ENCODE measurements at regions of chrX and their contacts with region 1.

Region 1: GRCh38 chrX:40097497-40098263 is at the start of gene BCOR:
- DNase-seq: peak; percentile 69 to 75 (median 72)
- H3K4me3 ChIP-seq: peak within 1 kb of the TSS in 1 of 2 donors; percentile 58
- H3K4me3 Mint-ChIP-seq: peak within 1 kb of the TSS; percentile 89 to 95 (median 91)
- H3K27ac ChIP-seq: peak within 1 kb of the TSS; percentile 63
- H3K27ac Mint-ChIP-seq: peak within 1 kb of the TSS; percentile 79 to 96 (median 92)
- H3K4me1 ChIP-seq: peaks cover 22% of the 10 kb centered on the region
- H3K4me1 Mint-ChIP-seq: peaks cover 9 to 38% (median 23%) of the 10 kb centered on the region in 4 donors
- H3K27me3 ChIP-seq: no peaks in the 10 kb centered on the region
- H3K27me3 Mint-ChIP-seq: no peaks in the 10 kb centered on the region
- total RNA-seq, gene BCOR: 47.1 to 48.7 TPM

Region 2: DNA sequence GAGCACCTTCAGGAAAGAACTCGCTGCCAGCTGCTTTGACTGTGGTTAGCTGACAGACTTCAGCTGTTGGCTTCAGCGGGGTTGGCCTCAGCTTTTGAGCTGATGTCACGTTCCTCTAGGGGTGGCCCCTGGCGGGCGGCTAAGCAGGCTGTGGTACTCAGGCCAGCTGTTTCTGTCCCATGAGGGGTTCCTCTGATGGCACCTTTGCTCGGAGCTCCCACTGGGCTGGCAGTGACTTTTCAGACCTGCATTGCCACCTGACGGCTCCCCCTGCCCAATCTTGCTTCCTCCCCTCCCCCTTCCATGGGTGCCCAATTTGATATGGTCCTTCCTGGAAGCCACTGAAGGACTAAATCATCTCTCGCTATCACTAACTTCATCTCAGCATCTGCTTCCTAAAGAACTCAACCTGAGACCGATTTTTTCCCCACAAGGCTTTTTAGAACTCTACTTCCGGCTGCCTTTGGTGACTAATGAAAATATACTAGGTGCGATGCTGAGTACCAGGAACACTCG is 519.3 kb before region 1 on chrX:
- CTCF ChIA-PET with region 1: no interaction called
- POLR2A ChIA-PET with region 1: no interaction called
- intact Hi-C with region 1: no loop called
- DNase-seq: peak; percentile 9 to 42 (median 11)
- H3K4me3 ChIP-seq: no peak overlapping the region
- H3K4me3 Mint-ChIP-seq: peak overlapping the region; percentile 61 to 91 (median 82)
- H3K27ac ChIP-seq: no peak overlapping the region
- H3K27ac Mint-ChIP-seq: peak overlapping the region in 6 of 7 donors; percentile 36 to 89 (median 64)
- H3K4me1 ChIP-seq: peaks cover 11% of the 10 kb centered on the region
- H3K4me1 Mint-ChIP-seq: peaks cover 3 to 15% (median 5%) of the 10 kb centered on the region in 4 donors
- H3K27me3 ChIP-seq: no peaks in the 10 kb centered on the region
- H3K27me3 Mint-ChIP-seq: peaks cover 0 to 2% of the 10 kb centered on the region in 2 donors

Region 3: GRCh38 chrX:40013266-40014195 is 84.1 kb before region 1 on chrX:
- CTCF ChIA-PET with region 1: no interaction called
- POLR2A ChIA-PET with region 1: interaction called, 10 read pairs
- intact Hi-C with region 1: no loop called
- DNase-seq: peak in 2 of 5 donors; percentile 28 to 31
- H3K4me3 ChIP-seq: peak overlapping the region in 1 of 2 donors; percentile 49
- H3K4me3 Mint-ChIP-seq: peak overlapping the region; percentile 64 to 84 (median 78)
- H3K27ac ChIP-seq: no peak overlapping the region
- H3K27ac Mint-ChIP-seq: peak overlapping the region in 2 of 7 donors; percentile 40 to 60
- H3K4me1 ChIP-seq: peaks cover 22% of the 10 kb centered on the region
- H3K4me1 Mint-ChIP-seq: peaks cover 4 to 26% (median 16%) of the 10 kb centered on the region in 4 donors
- H3K27me3 ChIP-seq: no peaks in the 10 kb centered on the region
- H3K27me3 Mint-ChIP-seq: peaks cover 3 to 5% of the 10 kb centered on the region in 2 donors

Region 4: DNA sequence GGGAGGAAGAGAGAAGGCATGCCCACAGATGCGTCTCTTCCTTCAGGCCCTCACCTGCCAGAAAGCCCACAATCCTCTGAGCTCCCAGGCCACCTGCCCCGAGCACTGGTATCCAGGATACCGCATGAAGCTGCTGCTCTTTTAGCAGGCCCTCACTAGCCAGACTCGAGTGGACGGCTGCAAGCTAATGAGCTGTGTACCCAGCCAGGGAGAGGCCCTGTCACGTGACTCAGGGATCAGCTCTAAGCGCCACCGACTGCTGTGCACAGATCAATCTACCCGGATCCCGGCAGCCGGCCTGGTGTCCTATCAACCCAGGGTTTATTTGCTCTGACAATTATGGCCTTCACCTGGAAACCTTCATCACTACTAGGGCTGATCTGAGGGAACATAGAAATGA is 39.0 kb before region 1 on chrX:
- CTCF ChIA-PET with region 1: no interaction called
- POLR2A ChIA-PET with region 1: no interaction called
- intact Hi-C with region 1: no loop called
- DNase-seq: no peak
- H3K4me3 ChIP-seq: no peak overlapping the region
- H3K4me3 Mint-ChIP-seq: no peak overlapping the region
- H3K27ac ChIP-seq: no peak overlapping the region
- H3K27ac Mint-ChIP-seq: peak overlapping the region in 1 of 7 donors; percentile 57
- H3K4me1 ChIP-seq: no peaks in the 10 kb centered on the region
- H3K4me1 Mint-ChIP-seq: peaks cover 0 to 7% (median 4%) of the 10 kb centered on the region in 4 donors
- H3K27me3 ChIP-seq: no peaks in the 10 kb centered on the region
- H3K27me3 Mint-ChIP-seq: no peaks in the 10 kb centered on the region

Region 5: GRCh38 chrX:40083120-40083978 is 14.3 kb before region 1 on chrX:
- CTCF ChIA-PET with region 1: interaction called, 3 read pairs
- POLR2A ChIA-PET with region 1: interaction called, 28 read pairs
- intact Hi-C with region 1: loop called (anchors 2 kb)
- DNase-seq: no peak
- H3K4me3 ChIP-seq: peak overlapping the region in 1 of 2 donors; percentile 32
- H3K4me3 Mint-ChIP-seq: peak overlapping the region; percentile 66 to 86 (median 82)
- H3K27ac ChIP-seq: peak overlapping the region; percentile 9
- H3K27ac Mint-ChIP-seq: peak overlapping the region in 3 of 7 donors; percentile 72 to 80 (median 72)
- H3K4me1 ChIP-seq: peaks cover 63% of the 10 kb centered on the region
- H3K4me1 Mint-ChIP-seq: peaks cover 31 to 82% (median 56%) of the 10 kb centered on the region in 4 donors
- H3K27me3 ChIP-seq: no peaks in the 10 kb centered on the region
- H3K27me3 Mint-ChIP-seq: no peaks in the 10 kb centered on the region

Region 6: DNA sequence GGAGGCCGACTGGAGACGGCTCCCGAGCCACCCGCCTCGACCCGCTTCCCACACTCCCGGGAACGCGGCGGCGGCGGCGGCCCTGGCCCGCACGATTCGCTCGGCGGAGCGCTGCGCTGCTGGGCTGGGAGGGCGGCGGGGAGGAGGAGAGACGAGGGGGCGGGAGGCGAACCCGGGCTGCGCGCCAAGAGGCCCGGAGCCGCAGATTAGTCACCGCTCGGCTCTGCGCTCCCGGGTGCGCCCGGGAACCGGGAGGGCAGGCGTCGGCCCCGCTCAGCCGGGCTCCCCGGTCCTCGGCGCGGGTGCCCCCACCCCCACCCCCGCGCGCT is 11.2 kb after region 1 on chrX:
- CTCF ChIA-PET with region 1: interaction called, 3 read pairs
- POLR2A ChIA-PET with region 1: interaction called, 102 read pairs
- intact Hi-C with region 1: loop called (anchors 1 kb)
- DNase-seq: peak; percentile 57 to 72 (median 60)
- H3K4me3 ChIP-seq: peak overlapping the region in 1 of 2 donors; percentile 19
- H3K4me3 Mint-ChIP-seq: peak overlapping the region in 4 of 8 donors; percentile 60 to 75 (median 66)
- H3K27ac ChIP-seq: no peak overlapping the region
- H3K27ac Mint-ChIP-seq: no peak overlapping the region
- H3K4me1 ChIP-seq: peaks cover 20% of the 10 kb centered on the region
- H3K4me1 Mint-ChIP-seq: peaks cover 3 to 18% (median 12%) of the 10 kb centered on the region in 4 donors
- H3K27me3 ChIP-seq: no peaks in the 10 kb centered on the region
- H3K27me3 Mint-ChIP-seq: no peaks in the 10 kb centered on the region

Region 7: GRCh38 chrX:40153335-40154249 is 55.9 kb after region 1 on chrX:
- CTCF ChIA-PET with region 1: interaction called, 4 read pairs
- POLR2A ChIA-PET with region 1: interaction called, 82 read pairs
- intact Hi-C with region 1: loop called (anchors 2 kb)
- DNase-seq: peak in 4 of 5 donors; percentile 44 to 83 (median 54)
- H3K4me3 ChIP-seq: peak overlapping the region; percentile 3 to 50
- H3K4me3 Mint-ChIP-seq: peak overlapping the region; percentile 81 to 92 (median 84)
- H3K27ac ChIP-seq: no peak overlapping the region
- H3K27ac Mint-ChIP-seq: peak overlapping the region; percentile 12 to 79 (median 60)
- H3K4me1 ChIP-seq: peaks cover under 1% of the 10 kb centered on the region
- H3K4me1 Mint-ChIP-seq: peaks cover 1 to 18% (median 11%) of the 10 kb centered on the region in 4 donors
- H3K27me3 ChIP-seq: no peaks in the 10 kb centered on the region
- H3K27me3 Mint-ChIP-seq: no peaks in the 10 kb centered on the region

Region 8: DNA sequence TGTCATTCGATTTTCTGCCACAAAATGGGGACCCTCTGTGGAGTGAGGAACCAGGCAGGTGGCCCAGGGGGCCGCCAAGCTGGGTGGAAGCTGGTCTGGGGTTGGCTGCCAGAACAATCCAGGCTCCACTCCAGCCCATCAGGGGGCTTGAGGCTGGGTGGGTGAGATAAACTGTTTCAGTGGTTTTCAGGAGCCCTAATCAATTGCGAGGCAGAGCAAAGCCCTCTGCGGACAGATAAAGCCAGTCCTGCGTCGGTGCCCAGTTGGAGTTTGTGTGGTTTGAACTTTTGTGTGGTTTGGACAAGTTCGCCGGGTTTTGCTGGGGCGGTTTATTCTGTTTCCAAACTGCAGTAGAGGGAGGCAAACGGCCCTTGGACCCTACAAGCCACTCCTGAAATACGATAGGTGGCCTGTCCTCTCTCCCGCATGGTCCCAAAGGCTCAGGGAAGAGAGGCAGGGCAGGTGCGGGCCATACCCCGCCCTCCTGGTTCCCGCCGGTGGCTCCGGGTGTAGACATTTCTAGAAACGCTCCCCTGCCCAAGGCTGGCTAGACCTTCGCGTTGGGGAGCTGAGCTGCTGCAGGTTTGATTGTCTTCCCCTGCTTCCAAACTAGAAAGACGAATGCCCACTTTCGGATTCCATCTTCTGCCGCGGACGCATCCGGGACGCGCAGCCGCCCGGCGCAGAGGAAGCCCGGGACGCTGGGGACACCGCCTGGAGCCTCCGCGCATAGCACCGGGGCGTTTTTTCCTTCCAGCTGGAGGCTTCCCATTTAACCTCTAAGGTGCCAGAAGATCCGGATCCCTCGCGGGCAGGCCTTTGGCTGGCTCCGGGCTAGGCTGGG is 169.0 kb after region 1 on chrX:
- CTCF ChIA-PET with region 1: no interaction called
- POLR2A ChIA-PET with region 1: no interaction called
- intact Hi-C with region 1: loop called (anchors 2 kb)
- DNase-seq: peak; percentile 35 to 47 (median 40)
- H3K4me3 ChIP-seq: peak overlapping the region; percentile 36 to 57
- H3K4me3 Mint-ChIP-seq: peak overlapping the region; percentile 74 to 87 (median 82)
- H3K27ac ChIP-seq: no peak overlapping the region
- H3K27ac Mint-ChIP-seq: peak overlapping the region in 3 of 7 donors; percentile 27 to 82 (median 63)
- H3K4me1 ChIP-seq: peaks cover 10% of the 10 kb centered on the region
- H3K4me1 Mint-ChIP-seq: peaks cover 0 to 16% (median 3%) of the 10 kb centered on the region in 4 donors
- H3K27me3 ChIP-seq: no peaks in the 10 kb centered on the region
- H3K27me3 Mint-ChIP-seq: no peaks in the 10 kb centered on the region